Mucosa of descending colon (tissue), 3 donors: ENCODE measurements at regions of chr13 and their contacts with region 1.

Region 1: GRCh38 chr13:110915057-110915873 is at the start of gene ANKRD10:
- DNase-seq: peak; percentile 99 to 100 (median 100)
- ATAC-seq: peak; percentile 86
- H3K4me3 ChIP-seq: peak within 1 kb of the TSS; percentile 94
- H3K4me1 ChIP-seq: peaks cover 21% of the 10 kb centered on the region
- CTCF ChIP-seq: peak; percentile 97
- total RNA-seq, gene ANKRD10: 120 to 157 (median 155) TPM

Region 2: GRCh38 chr13:110340812-110341444 is 574.3 kb before region 1 on chr13:
- intact Hi-C with region 1: no loop called
- DNase-seq: peak; percentile 59 to 77 (median 65)
- ATAC-seq: peak; percentile 51
- H3K4me3 ChIP-seq: no peak overlapping the region
- H3K4me1 ChIP-seq: peaks cover 5% of the 10 kb centered on the region
- CTCF ChIP-seq: no peak

Region 3: DNA sequence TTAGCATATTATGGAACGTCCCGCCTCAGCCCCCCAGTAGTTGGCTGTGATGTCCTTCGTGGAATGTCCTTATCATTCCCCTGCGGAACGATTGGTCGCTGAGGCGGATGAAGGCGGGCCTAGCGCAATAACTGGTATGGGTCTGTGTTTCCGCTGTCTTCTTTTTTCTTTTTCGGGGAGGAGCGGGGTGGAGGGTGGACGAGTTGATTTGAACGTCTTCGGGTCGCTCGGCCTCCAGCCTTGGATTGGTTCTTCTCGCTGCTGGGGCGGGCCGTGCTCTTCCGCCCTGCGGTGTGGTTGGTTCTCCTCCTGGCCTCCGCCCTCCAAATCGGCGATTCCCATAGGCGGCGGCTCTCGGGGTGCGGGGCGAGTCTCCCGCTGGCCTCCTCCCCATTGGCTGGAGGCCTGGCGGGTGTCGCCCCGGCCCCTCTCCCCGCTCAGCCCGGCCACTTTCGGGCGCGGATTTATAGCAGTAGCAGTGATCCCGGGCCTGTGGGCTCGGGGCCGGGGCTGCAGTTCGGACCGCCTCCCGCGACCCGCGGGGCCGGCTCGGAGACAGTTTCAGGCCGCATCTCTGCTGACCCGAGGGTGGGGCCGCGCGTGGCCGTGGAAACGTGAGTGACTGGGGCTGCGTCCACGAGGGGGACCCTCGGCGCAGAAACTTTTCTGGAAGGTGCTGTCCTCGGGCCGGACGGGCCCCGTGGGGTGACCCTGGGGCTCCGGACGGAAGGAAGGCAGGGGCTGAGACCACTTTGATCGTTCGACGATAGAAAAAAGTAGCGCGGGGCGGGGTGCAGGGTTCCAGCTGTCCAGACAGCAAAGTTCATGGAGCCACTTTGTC is 199.7 kb before region 1 on chr13:
- intact Hi-C with region 1: loop called in 1 of 2 experiments (anchors 10 kb)
- DNase-seq: peak; percentile 98 to 99 (median 98)
- ATAC-seq: peak; percentile 65
- H3K4me3 ChIP-seq: peak overlapping the region; percentile 58
- H3K4me1 ChIP-seq: peaks cover 10% of the 10 kb centered on the region
- CTCF ChIP-seq: peak; percentile 19